ENCODE measurements at regions of chr19 and their contacts with region 1.

Region 1: GRCh38 chr19:2096480-2097329 is at the start of gene IZUMO4:
- DNase-seq: peak; percentile 100
- H3K4me3 Mint-ChIP-seq: peak within 1 kb of the TSS; percentile 94
- H3K27ac Mint-ChIP-seq: peak within 1 kb of the TSS; percentile 87
- H3K4me1 Mint-ChIP-seq: peaks cover 29% of the 10 kb centered on the region
- H3K27me3 Mint-ChIP-seq: no peaks in the 10 kb centered on the region
- total RNA-seq, gene IZUMO4: 14.2 to 16.4 TPM

Region 2: DNA sequence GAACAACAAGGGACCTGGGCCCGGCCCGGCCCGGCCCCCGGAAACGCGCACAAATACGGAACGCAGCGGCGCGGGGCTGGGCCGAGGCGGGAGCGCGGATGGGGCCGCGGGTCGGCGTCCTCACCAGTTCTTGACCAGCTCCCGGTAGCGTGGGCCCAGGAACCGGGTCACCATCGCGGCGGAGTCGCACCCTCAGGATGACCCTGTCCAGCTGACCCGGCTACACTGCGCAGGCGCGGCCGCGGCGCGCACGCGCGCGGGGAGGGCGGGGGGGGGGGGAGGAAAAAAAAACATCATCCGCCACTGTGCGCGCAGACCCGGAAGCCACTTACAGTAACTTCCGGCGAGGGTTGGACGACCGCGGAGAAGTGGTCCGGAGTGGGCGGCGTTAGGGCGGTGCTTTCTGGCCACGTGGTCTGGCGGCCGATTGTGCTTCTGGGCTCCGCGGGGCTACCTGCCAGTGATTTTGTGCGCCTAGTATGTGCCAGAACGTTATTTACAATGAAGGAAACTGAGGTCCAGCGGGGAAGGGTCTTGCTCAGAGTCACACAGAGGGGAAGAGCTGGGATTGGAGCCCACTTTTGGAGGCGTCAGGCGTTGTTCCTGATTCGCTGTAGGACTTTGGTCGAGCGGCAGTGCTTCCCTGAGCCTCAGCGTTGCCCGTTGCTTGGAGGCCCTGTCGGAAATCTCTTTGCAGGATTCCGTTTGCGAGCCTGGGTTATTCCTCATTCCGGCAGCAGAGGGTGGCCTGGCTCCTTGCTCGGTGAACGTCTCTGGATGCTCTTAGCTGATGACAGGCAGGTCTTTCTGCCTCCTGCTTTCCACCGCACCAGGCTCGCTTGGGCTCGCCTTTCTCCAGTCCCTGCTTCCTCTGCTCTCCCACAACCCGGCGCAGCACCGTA is 491.2 kb before region 1 on chr19 and contains the start of gene UQCR11:
- CTCF ChIA-PET with region 1: no interaction called
- POLR2A ChIA-PET with region 1: no interaction called
- intact Hi-C with region 1: loop called (anchors 10 kb)
- DNase-seq: peak; percentile 96
- H3K4me3 Mint-ChIP-seq: peak within 1 kb of the TSS; percentile 88
- H3K27ac Mint-ChIP-seq: peak within 1 kb of the TSS; percentile 94
- H3K4me1 Mint-ChIP-seq: peaks cover 44% of the 10 kb centered on the region
- H3K27me3 Mint-ChIP-seq: no peaks in the 10 kb centered on the region
- total RNA-seq, gene UQCR11: 266 to 277 TPM

Region 3: DNA sequence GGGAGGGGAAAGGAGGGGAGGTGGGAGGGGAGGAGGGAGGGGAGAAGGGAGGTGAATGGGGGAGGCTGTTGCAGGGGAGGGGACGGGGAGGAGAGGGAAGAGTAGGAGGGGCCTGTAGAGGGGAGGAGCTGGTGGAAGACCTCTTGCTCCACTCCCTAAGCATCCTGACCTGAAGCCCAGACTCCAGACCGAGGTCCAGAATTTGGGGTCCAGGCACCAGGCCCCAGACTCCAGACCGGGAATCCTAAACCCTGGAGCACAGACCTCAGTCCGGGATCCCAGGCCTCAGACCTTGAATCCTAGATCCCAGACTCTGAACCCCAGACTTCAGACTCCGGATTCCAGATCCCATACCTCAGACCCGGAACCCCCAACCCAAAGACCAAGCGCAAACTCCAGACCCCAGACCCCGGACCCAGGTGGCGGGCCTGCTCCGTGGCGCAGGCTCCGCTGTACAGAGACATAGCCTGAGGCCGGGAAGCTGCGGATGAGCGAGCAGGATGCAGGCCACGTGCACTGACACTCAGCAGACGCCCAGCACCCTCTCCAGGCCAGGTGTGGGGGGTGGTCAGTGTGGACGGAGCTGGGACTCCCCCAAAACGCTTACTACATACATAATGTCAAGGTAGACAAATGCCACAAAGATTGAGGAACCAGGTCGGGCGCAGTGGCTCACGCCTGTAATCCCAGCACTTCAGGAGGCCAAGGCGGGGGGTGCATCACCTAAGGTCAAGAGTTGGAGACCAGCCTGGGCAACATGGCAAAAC is 80.5 kb before region 1 on chr19:
- CTCF ChIA-PET with region 1: interaction called, 5 read pairs
- POLR2A ChIA-PET with region 1: interaction called, 3 read pairs
- intact Hi-C with region 1: loop called (anchors 2 kb)
- DNase-seq: peak; percentile 82
- H3K4me3 Mint-ChIP-seq: peak overlapping the region; percentile 60
- H3K27ac Mint-ChIP-seq: peak overlapping the region; percentile 28
- H3K4me1 Mint-ChIP-seq: peaks cover 15% of the 10 kb centered on the region
- H3K27me3 Mint-ChIP-seq: no peaks in the 10 kb centered on the region

Region 4: DNA sequence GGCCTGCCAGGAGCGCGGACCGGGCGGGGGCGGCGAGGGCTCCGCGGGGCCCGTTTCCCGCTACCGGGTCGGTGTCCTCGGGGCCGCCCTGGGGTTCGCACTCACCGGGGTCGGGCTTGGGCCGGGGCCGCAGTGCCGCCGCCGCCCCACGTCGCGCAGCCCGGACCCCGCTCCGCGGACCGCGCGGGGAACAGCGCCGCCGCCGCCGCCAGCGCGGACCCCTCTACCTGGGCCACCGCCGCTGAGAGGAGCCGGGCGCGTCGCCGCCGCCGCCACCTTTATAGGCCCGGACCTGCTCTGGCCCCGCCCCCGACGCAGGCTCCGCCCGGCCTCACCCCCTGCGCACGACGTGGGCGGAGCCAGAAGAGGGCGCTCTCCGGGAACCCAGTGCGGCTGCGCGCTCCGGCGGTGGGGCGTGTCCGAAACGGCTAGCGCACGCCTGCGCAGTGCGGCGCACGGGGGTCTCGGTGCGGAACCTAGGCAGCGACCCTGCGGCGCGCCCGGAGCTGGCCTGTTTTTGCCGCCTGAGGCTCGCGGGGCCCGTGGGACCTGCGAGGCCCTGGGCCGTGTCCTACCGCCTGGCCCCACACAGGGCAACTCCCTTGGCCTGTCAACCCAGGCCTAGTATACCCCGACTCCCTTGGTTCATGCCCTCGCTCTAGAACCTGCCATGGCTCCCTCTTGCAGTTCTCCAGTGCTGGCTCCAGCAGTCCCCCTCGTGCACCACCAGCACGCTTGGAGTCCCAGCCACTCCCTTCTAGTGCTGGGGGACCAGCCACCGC is 45.5 kb before region 1 on chr19 and contains the start of gene MKNK2:
- CTCF ChIA-PET with region 1: no interaction called
- POLR2A ChIA-PET with region 1: interaction called, 4 read pairs
- intact Hi-C with region 1: loop called (anchors 2 kb)
- DNase-seq: peak; percentile 95
- H3K4me3 Mint-ChIP-seq: peak within 1 kb of the TSS; percentile 86
- H3K27ac Mint-ChIP-seq: peak within 1 kb of the TSS; percentile 92
- H3K4me1 Mint-ChIP-seq: peaks cover 45% of the 10 kb centered on the region
- H3K27me3 Mint-ChIP-seq: no peaks in the 10 kb centered on the region
- total RNA-seq, gene MKNK2: 143 to 157 TPM

Region 5: DNA sequence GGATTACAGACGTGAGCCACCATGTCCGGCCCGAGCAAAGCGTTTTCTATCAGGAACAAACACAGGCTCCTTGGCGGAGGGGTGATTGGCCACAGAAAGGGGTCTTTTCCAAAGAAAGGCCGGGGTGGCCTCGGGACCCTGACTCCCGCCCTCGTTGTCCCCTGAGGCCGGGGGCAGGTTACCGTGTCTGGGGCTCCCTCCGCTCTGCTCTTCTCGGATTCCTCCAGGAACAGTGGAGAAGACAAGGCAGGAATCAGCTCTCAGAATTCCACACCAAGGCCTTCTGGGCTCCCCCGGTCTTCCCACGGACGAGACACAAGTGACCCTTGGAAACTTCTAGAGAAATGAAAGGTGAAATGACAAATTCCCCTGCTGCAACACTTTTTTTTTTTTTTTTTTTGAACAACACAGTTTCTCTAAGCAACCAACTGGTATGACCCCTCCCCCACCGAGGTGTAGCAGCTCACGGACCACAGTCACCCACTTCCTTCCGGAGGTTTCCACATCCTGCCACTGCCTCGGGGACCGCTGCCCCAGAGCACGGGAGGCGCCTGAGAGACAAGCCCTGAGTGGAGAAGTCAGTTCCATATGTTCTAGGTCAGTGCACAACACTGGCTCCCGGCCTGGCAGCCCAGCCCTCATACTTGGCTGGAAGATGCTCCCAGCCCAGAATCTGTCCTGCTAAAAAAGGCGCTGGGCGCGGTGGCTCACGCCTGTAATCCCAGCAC is 11.5 kb before region 1 on chr19:
- CTCF ChIA-PET with region 1: interaction called, 13 read pairs
- POLR2A ChIA-PET with region 1: interaction called, 41 read pairs
- intact Hi-C with region 1: loop called (anchors 1 kb)
- DNase-seq: peak; percentile 97
- H3K4me3 Mint-ChIP-seq: peak overlapping the region; percentile 99
- H3K27ac Mint-ChIP-seq: peak overlapping the region; percentile 99
- H3K4me1 Mint-ChIP-seq: peaks cover 59% of the 10 kb centered on the region
- H3K27me3 Mint-ChIP-seq: no peaks in the 10 kb centered on the region

Measured in activated CD4-positive, alpha-beta memory T cell treated with anti-CD3 and anti-CD28 coated beads for 36 hours (primary cell).